Endothelial cell of umbilical vein (primary cell): ENCODE measurements at regions of chr16 and their contacts with region 1.

Region 1: DNA sequence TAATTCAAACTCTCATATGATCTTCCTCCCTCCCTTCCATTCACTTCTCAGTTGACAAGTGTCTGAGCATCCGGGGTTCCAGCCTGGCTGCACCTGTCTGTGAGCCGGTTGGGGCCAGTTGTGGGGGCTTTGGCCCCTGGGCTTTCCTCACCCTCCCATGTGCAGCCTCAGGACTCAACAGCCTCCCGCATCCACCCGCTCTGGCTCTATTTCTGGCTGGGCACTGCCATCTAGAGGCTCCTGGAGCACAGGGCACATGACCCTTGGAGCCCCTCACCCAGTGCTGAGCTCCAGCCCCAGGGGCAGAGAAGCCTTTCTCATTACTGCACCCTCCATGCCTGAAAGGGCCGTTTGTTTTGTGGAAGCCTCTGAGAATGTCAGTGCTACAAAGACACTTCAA is 43.3 kb downstream of the HAPSTR1 start:
- DNase-seq: peak; percentile 47
- H3K4me3 ChIP-seq: no peak overlapping the region
- H3K27ac ChIP-seq: no peak overlapping the region
- H3K4me1 ChIP-seq: no peaks in the 10 kb centered on the region
- H3K27me3 ChIP-seq: no peaks in the 10 kb centered on the region
- CTCF ChIP-seq: peak; percentile 57 to 70
- POLR2A ChIP-seq: no peak

Region 2: DNA sequence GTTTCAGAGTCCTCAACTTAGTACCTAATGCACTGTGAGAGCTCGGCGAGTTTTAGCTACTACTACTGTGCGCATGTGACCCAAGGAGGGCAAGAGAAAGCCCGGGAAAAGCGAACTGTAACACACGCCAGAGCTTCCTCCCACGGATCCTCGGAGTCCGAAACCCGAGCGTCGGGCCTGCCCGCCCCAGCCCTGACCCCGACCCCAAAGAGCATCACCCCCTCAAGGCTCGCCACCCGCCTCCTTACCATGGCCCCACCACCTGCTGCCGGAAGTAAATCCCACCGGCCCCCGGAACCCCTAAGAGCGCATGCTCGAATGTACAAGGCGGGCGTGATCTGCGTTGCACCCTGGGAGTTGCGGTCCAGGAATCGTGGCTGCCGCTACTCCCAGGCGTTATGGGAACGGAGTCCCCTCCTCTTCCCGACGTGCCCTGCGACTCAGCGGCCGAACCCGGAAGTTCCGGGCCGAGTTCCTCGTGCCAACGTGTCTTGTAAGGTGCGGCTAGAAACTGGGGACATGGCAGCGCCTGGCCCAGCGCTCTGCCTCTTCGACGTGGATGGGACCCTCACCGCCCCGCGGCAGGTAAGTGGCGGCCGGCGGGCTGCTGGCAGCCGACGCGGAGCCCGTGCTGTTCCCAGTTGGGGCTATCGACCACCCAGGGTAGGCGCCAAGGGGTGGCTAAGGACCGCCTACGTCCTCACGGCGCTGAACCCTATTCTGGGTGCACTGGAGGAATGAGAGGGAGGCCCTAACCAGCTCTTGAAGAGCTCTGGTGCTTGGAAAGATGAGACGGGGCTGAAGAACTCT is 337.2 kb before region 1 on chr16 and contains the starts of genes PMM2 and TMEM186:
- CTCF ChIA-PET with region 1: interaction called, 6 read pairs
- POLR2A ChIA-PET with region 1: no interaction called
- dilution Hi-C with region 1: no loop called
- intact Hi-C with region 1: loop called (anchors 10 kb)
- DNase-seq: peak; percentile 98
- H3K4me3 ChIP-seq: peak within 1 kb of the TSS; percentile 65 to 95 (median 83)
- H3K27ac ChIP-seq: peak within 1 kb of the TSS; percentile 62
- H3K4me1 ChIP-seq: peaks cover 25% of the 10 kb centered on the region
- H3K27me3 ChIP-seq: no peaks in the 10 kb centered on the region
- CTCF ChIP-seq: no peak
- POLR2A ChIP-seq: peak; percentile 86
- total RNA-seq, gene PMM2: 61.3 and 62.8 TPM in 2 replicates
- total RNA-seq, gene TMEM186: 8.3 and 9.6 TPM in 2 replicates

Region 3: GRCh38 chr16:8936421-8936820 is 198.3 kb before region 1 on chr16:
- CTCF ChIA-PET with region 1: interaction called, 13 read pairs
- POLR2A ChIA-PET with region 1: no interaction called
- dilution Hi-C with region 1: no loop called
- intact Hi-C with region 1: loop called (anchors 1 kb)
- DNase-seq: peak; percentile 29
- H3K4me3 ChIP-seq: no peak overlapping the region
- H3K27ac ChIP-seq: no peak overlapping the region
- H3K4me1 ChIP-seq: no peaks in the 10 kb centered on the region
- H3K27me3 ChIP-seq: no peaks in the 10 kb centered on the region
- CTCF ChIP-seq: peak; percentile 27 to 57
- POLR2A ChIP-seq: no peak

Region 4: GRCh38 chr16:9077091-9077809 is 57.5 kb before region 1 on chr16:
- CTCF ChIA-PET with region 1: no interaction called
- POLR2A ChIA-PET with region 1: no interaction called
- dilution Hi-C with region 1: no loop called
- intact Hi-C with region 1: no loop called
- DNase-seq: no peak
- H3K4me3 ChIP-seq: no peak overlapping the region
- H3K27ac ChIP-seq: no peak overlapping the region
- H3K4me1 ChIP-seq: peaks cover 5% of the 10 kb centered on the region
- H3K27me3 ChIP-seq: no peaks in the 10 kb centered on the region
- CTCF ChIP-seq: no peak
- POLR2A ChIP-seq: no peak

Region 5: DNA sequence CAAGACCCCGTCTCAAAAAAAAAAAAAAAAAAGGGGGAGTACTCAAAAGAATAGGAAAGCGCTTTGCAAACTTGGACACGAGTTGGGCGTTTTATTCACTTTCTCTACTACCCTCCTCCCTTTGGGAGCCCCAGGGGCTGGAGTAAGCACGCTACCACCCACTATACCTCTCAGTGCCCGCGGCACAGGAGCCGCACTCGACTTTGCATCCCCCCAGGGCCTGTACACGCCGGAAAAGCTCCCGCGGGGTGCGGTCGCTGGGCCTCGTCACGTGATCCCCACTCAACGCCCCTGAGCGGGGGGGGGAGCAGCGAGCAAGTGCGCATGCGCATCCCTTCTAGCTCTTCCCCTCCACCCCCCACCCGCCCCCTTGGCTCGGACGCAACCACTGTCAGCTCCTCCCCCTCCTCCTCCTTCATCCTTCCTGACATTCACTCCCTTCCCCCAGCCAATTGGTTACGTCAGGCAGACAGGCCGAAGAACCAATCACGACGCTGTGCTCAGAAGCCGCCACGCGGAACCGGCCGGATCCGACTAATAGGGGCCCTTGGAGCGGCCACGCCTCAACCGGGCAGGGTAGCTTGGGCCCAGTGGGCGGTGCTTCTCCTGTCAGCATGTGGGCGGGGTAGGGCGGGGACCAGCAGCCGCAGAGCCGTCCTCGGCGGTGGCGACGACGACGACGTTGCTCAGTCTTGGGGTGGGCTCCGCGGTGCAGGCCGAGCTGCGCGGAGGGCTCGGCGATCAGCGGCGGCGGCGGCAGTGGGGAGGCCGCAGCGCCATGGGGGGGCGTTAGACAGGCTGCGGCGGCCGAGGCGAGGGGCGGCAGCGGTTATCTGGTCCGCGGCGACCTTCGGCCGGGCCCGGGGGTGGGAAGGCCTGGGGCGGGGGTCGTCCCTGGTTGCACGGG is 43.5 kb before region 1 on chr16 and contains the start of gene HAPSTR1:
- CTCF ChIA-PET with region 1: interaction called, 8 read pairs
- POLR2A ChIA-PET with region 1: interaction called, 5 read pairs
- dilution Hi-C with region 1: no loop called
- intact Hi-C with region 1: loop called (anchors 2 kb)
- DNase-seq: peak; percentile 100
- H3K4me3 ChIP-seq: peak within 1 kb of the TSS; percentile 73 to 89 (median 80)
- H3K27ac ChIP-seq: peak within 1 kb of the TSS; percentile 78
- H3K4me1 ChIP-seq: peaks cover 32% of the 10 kb centered on the region
- H3K27me3 ChIP-seq: no peaks in the 10 kb centered on the region
- CTCF ChIP-seq: no peak
- POLR2A ChIP-seq: peak; percentile 96
- total RNA-seq, gene HAPSTR1: 60.1 and 63.7 TPM in 2 replicates

Region 6: DNA sequence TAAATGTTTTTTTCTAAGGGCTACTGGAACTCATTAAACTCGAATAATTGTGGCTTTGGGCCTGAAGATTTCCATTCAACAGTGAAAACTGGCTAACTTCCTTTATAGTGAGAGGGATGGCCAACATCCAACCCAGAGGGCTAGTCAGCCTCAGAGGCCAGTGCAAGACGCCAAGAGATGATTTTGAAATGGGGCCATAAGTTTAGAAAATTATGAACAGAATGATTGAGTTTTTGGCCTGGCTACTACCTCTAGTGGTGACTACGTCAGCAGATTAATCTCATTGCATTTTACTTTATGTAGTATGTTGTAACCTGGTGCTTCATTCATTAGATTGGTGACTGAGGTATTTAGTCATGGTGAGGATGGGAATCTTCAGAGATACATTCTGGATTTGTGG is 14.9 kb before region 1 on chr16:
- CTCF ChIA-PET with region 1: interaction called, 10 read pairs
- POLR2A ChIA-PET with region 1: no interaction called
- dilution Hi-C with region 1: no loop called
- intact Hi-C with region 1: no loop called
- DNase-seq: no peak
- H3K4me3 ChIP-seq: no peak overlapping the region
- H3K27ac ChIP-seq: no peak overlapping the region
- H3K4me1 ChIP-seq: peaks cover 11% of the 10 kb centered on the region
- H3K27me3 ChIP-seq: no peaks in the 10 kb centered on the region
- CTCF ChIP-seq: no peak
- POLR2A ChIP-seq: no peak

Region 7: GRCh38 chr16:9197957-9198661 is 63.4 kb after region 1 on chr16:
- CTCF ChIA-PET with region 1: no interaction called
- POLR2A ChIA-PET with region 1: no interaction called
- dilution Hi-C with region 1: no loop called
- intact Hi-C with region 1: no loop called
- DNase-seq: no peak
- H3K4me3 ChIP-seq: no peak overlapping the region
- H3K27ac ChIP-seq: no peak overlapping the region
- H3K4me1 ChIP-seq: no peaks in the 10 kb centered on the region
- H3K27me3 ChIP-seq: no peaks in the 10 kb centered on the region
- CTCF ChIP-seq: no peak
- POLR2A ChIP-seq: no peak

Region 8: DNA sequence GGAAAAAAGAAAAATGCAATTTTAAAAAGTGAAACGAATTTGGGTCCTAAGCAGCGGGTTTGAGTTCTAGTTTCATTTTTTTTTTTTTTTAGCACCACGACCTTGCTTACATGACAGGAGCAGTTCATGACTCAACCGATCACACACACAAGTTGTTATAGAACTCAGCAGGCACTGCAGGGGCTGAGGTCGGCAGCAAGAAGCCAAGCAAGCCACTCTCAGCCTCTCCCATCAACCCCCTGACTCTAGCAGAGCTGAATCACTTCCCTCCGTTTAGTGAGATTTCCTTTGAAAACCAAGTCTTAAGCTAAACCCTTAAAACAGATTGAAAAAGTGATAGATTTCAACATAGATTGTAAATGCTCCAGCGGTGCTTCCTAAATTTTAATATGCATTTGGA is 477.5 kb after region 1 on chr16:
- CTCF ChIA-PET with region 1: no interaction called
- POLR2A ChIA-PET with region 1: no interaction called
- dilution Hi-C with region 1: no loop called
- intact Hi-C with region 1: no loop called
- DNase-seq: peak; percentile 75
- H3K4me3 ChIP-seq: no peak overlapping the region
- H3K27ac ChIP-seq: no peak overlapping the region
- H3K4me1 ChIP-seq: peaks cover 4% of the 10 kb centered on the region
- H3K27me3 ChIP-seq: no peaks in the 10 kb centered on the region
- CTCF ChIP-seq: no peak
- POLR2A ChIP-seq: no peak